ENCODE measurements at regions of chr1 and their contacts with region 1.

Region 1: GRCh38 chr1:2412519-2413233 is at the start of gene PEX10:
- DNase-seq: peak; percentile 95
- H3K4me3 ChIP-seq: peak within 1 kb of the TSS; percentile 57 to 85 (median 71)
- H3K27ac ChIP-seq: peak within 1 kb of the TSS; percentile 57
- H3K4me1 ChIP-seq: peaks cover 10% of the 10 kb centered on the region
- H3K27me3 ChIP-seq: no peaks in the 10 kb centered on the region
- CTCF ChIP-seq: no peak
- POLR2A ChIP-seq: peak; percentile 53
- total RNA-seq, gene PEX10: 23.0 and 26.7 TPM in 2 replicates

Region 2: GRCh38 chr1:2451744-2452143 is 39.1 kb after region 1 on chr1:
- CTCF ChIA-PET with region 1: interaction called, 4 read pairs
- POLR2A ChIA-PET with region 1: no interaction called
- dilution Hi-C with region 1: no loop called
- intact Hi-C with region 1: loop called (anchors 2 kb)
- DNase-seq: peak; percentile 75
- H3K4me3 ChIP-seq: no peak overlapping the region
- H3K27ac ChIP-seq: peak overlapping the region; percentile 90
- H3K4me1 ChIP-seq: peaks cover 27% of the 10 kb centered on the region
- H3K27me3 ChIP-seq: no peaks in the 10 kb centered on the region
- CTCF ChIP-seq: no peak
- POLR2A ChIP-seq: peak; percentile 41

Region 3: DNA sequence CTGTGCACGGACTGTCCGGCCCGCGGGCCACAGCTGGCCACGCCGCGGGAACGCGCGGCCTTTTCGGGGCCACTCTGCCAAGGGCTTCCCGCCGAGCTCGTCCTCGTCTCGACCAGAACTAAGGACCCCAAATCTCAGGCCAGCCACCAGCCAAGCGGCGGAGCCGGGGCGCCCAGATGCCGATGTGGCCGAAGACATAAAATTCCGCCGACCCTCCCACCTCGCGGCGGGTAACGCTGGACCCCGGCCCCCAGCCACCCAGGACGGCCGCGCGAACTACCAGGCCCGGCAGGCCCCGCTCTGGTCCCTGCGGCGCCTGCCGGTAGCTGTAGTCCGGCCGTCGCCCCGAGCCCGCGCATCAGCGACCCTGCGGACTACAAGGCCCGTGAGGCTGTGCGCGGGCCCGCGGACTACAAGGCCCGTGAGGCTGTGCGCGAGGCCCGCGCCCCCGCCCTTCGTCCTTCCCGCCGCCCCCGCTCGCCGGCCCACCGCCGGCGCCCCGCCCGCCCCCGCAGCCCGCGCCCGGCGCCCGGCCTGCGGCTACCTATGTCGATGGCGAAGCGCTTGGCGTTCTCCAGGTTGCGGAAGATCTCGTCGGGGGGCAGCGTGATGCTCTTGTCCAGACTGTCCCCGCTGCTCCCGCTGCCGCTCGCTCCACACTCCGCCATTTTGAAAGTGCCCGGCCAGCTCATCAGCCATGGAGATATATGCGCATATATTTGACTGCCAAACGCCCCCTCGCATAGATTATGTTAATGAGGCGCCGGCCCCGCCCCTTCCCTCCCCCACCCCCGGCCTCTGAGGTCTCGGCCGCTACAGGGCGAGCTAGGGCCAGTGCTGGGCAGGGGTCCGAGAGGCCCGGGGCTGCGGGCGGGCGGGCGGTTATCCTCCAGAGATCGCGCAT is 113.5 kb after region 1 on chr1 and contains the start of gene PANK4:
- CTCF ChIA-PET with region 1: interaction called, 3 read pairs
- POLR2A ChIA-PET with region 1: no interaction called
- dilution Hi-C with region 1: no loop called
- intact Hi-C with region 1: loop called (anchors 2 kb)
- DNase-seq: peak; percentile 84
- H3K4me3 ChIP-seq: peak within 1 kb of the TSS; percentile 75 to 97 (median 91)
- H3K27ac ChIP-seq: peak within 1 kb of the TSS; percentile 58
- H3K4me1 ChIP-seq: peaks cover 17% of the 10 kb centered on the region
- H3K27me3 ChIP-seq: peaks cover 10 to 17% of the 10 kb centered on the region in 2 experiments
- CTCF ChIP-seq: no peak
- POLR2A ChIP-seq: peak; percentile 82
- total RNA-seq, gene PANK4: 34.0 and 34.7 TPM in 2 replicates

Region 4: GRCh38 chr1:2580691-2581090 is 168.0 kb after region 1 on chr1:
- CTCF ChIA-PET with region 1: interaction called, 3 read pairs
- POLR2A ChIA-PET with region 1: no interaction called
- dilution Hi-C with region 1: no loop called
- intact Hi-C with region 1: loop called (anchors 1 kb)
- DNase-seq: no peak
- H3K4me3 ChIP-seq: no peak overlapping the region
- H3K27ac ChIP-seq: peak overlapping the region; percentile 86
- H3K4me1 ChIP-seq: peaks cover 34% of the 10 kb centered on the region
- H3K27me3 ChIP-seq: no peaks in the 10 kb centered on the region
- CTCF ChIP-seq: no peak
- POLR2A ChIP-seq: no peak

Region 5: GRCh38 chr1:2642560-2643413 is 230.1 kb after region 1 on chr1:
- CTCF ChIA-PET with region 1: no interaction called
- POLR2A ChIA-PET with region 1: no interaction called
- dilution Hi-C with region 1: no loop called
- intact Hi-C with region 1: loop called (anchors 1 kb)
- DNase-seq: peak; percentile 89
- H3K4me3 ChIP-seq: peak overlapping the region; percentile 55 to 87 (median 60)
- H3K27ac ChIP-seq: peak overlapping the region; percentile 79
- H3K4me1 ChIP-seq: peaks cover 8% of the 10 kb centered on the region
- H3K27me3 ChIP-seq: no peaks in the 10 kb centered on the region
- CTCF ChIP-seq: peak in 1 of 2 donors; percentile 21
- POLR2A ChIP-seq: peak; percentile 68

Region 6: DNA sequence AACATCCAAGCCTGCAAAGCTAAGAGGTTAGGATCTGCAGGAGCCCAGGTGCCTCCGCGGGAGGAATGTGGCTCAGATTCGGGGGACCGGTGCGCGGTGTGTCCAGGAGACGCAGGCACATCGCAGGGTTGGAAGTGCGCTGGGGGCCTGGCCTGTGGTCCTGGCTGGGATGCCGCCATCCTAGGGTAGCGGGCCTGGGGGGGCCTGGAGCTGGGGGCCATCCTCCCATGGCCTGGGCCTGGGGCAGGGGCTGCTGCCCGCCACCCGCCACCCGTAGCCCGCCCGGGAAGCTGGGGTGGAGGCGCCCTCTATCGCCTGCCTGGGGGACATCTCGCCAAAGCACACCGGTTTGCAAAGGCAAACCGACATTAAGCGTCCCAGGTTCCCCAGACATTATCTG is 871.2 kb after region 1 on chr1:
- CTCF ChIA-PET with region 1: no interaction called
- POLR2A ChIA-PET with region 1: no interaction called
- dilution Hi-C with region 1: no loop called
- intact Hi-C with region 1: loop called (anchors 1 kb)
- DNase-seq: no peak
- H3K4me3 ChIP-seq: no peak overlapping the region
- H3K27ac ChIP-seq: no peak overlapping the region
- H3K4me1 ChIP-seq: no peaks in the 10 kb centered on the region
- H3K27me3 ChIP-seq: no peaks in the 10 kb centered on the region
- CTCF ChIP-seq: peak; percentile 14 to 46
- POLR2A ChIP-seq: no peak

Region 7: GRCh38 chr1:3423245-3423829 is 1010.7 kb after region 1 on chr1:
- CTCF ChIA-PET with region 1: interaction called, 34 read pairs
- POLR2A ChIA-PET with region 1: no interaction called
- dilution Hi-C with region 1: no loop called
- intact Hi-C with region 1: loop called (anchors 1 kb)
- DNase-seq: no peak
- H3K4me3 ChIP-seq: no peak overlapping the region
- H3K27ac ChIP-seq: no peak overlapping the region
- H3K4me1 ChIP-seq: no peaks in the 10 kb centered on the region
- H3K27me3 ChIP-seq: no peaks in the 10 kb centered on the region
- CTCF ChIP-seq: no peak
- POLR2A ChIP-seq: no peak